ENCODE measurements at regions of chr3 and their contacts with region 1.

Region 1: GRCh38 chr3:46705022-46705530 is 3.9 kb downstream of the TMIE start:
- DNase-seq: peak; percentile 80 to 88
- H3K4me3 ChIP-seq: no peak overlapping the region
- H3K27ac ChIP-seq: no peak overlapping the region
- H3K4me1 ChIP-seq: peaks cover 13 to 26% (median 16%) of the 10 kb centered on the region in 4 donors
- H3K27me3 ChIP-seq: peaks cover 0 to 26% (median 17%) of the 10 kb centered on the region in 3 donors
- CTCF ChIP-seq: peak in 5 of 7 experiments; percentile 91 to 98 (median 96)
- EP300 ChIP-seq: no peak
- POLR2A ChIP-seq: no peak

Region 2: DNA sequence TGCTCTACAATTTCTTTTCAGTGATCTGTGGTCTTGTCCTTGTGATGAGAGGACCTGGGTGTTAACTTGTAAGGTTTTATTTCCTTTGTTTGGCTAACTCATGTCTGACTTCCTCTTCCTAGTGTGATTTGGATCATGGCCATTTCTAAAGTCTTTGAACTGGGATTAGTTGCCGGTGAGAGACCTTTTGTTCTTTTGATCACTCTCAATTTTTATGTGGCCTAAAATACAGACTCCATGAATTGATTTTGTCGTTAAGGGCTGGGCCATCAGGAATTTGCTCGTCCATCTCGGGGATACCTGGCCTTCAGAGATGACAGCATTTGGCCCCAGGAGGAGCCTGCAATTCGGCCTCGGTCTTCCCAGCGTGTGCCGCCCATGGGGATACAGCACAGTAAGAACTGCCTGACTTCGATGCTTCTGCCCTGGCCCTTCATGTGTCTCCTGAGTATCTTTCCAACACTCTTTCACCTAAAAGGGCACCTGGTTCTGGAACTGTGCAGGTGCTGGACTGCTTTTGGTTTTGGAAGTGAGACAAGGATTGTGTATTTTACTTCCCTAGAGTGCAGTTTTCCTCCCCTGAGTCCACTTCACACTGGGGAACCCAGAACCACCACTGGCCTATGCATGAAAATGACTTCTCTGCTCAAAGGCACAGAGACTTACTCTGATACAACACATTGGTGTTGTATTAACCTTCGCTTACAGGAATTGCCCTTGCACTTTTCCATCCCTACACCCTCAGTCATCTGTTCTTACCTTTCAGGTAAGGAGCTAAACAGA is 125.9 kb before region 1 on chr3:
- intact Hi-C with region 1: no loop called
- DNase-seq: peak in 1 of 2 donors; percentile 47
- H3K4me3 ChIP-seq: no peak overlapping the region
- H3K27ac ChIP-seq: peak overlapping the region; percentile 63 to 81 (median 64)
- H3K4me1 ChIP-seq: peaks cover 22 to 49% (median 31%) of the 10 kb centered on the region in 4 donors
- H3K27me3 ChIP-seq: peaks cover 0 to 27% (median 0%) of the 10 kb centered on the region in 3 donors
- CTCF ChIP-seq: no peak
- EP300 ChIP-seq: no peak
- POLR2A ChIP-seq: no peak

Region 3: GRCh38 chr3:46860017-46860830 is 155.1 kb after region 1 on chr3:
- intact Hi-C with region 1: no loop called
- DNase-seq: peak in 1 of 2 donors; percentile 49
- H3K4me3 ChIP-seq: no peak overlapping the region
- H3K27ac ChIP-seq: no peak overlapping the region
- H3K4me1 ChIP-seq: peaks cover 0 to 5% (median 2%) of the 10 kb centered on the region in 4 donors
- H3K27me3 ChIP-seq: peaks cover 0 to 22% (median 0%) of the 10 kb centered on the region in 3 donors
- CTCF ChIP-seq: peak in 4 of 7 experiments; percentile 8 to 29 (median 22)
- EP300 ChIP-seq: no peak
- POLR2A ChIP-seq: no peak

Region 4: GRCh38 chr3:46903331-46904071 is 198.4 kb after region 1 on chr3:
- intact Hi-C with region 1: loop called (anchors 5 kb)
- DNase-seq: peak in 1 of 2 donors; percentile 2
- H3K4me3 ChIP-seq: no peak overlapping the region
- H3K27ac ChIP-seq: no peak overlapping the region
- H3K4me1 ChIP-seq: peaks cover 6 to 18% (median 11%) of the 10 kb centered on the region in 4 donors
- H3K27me3 ChIP-seq: peaks cover 0 to 17% (median 7%) of the 10 kb centered on the region in 3 donors
- CTCF ChIP-seq: no peak
- EP300 ChIP-seq: no peak
- POLR2A ChIP-seq: no peak